ENCODE measurements at regions of chr16 and their contacts with region 1.

Region 1: GRCh38 chr16:4253394-4254150 is 11.7 kb upstream of the SRL start:
- DNase-seq: peak; percentile 96
- H3K27ac ChIP-seq: peak overlapping the region; percentile 89
- CTCF ChIP-seq: no peak

Region 2: GRCh38 chr16:3983081-3983520 is 270.5 kb before region 1 on chr16:
- CTCF ChIA-PET with region 1: interaction called, 32 read pairs
- POLR2A ChIA-PET with region 1: no interaction called
- DNase-seq: peak; percentile 80
- H3K27ac ChIP-seq: no peak overlapping the region; the same call in 1 of the 2 replicates
- CTCF ChIP-seq: peak; percentile 82

Region 3: DNA sequence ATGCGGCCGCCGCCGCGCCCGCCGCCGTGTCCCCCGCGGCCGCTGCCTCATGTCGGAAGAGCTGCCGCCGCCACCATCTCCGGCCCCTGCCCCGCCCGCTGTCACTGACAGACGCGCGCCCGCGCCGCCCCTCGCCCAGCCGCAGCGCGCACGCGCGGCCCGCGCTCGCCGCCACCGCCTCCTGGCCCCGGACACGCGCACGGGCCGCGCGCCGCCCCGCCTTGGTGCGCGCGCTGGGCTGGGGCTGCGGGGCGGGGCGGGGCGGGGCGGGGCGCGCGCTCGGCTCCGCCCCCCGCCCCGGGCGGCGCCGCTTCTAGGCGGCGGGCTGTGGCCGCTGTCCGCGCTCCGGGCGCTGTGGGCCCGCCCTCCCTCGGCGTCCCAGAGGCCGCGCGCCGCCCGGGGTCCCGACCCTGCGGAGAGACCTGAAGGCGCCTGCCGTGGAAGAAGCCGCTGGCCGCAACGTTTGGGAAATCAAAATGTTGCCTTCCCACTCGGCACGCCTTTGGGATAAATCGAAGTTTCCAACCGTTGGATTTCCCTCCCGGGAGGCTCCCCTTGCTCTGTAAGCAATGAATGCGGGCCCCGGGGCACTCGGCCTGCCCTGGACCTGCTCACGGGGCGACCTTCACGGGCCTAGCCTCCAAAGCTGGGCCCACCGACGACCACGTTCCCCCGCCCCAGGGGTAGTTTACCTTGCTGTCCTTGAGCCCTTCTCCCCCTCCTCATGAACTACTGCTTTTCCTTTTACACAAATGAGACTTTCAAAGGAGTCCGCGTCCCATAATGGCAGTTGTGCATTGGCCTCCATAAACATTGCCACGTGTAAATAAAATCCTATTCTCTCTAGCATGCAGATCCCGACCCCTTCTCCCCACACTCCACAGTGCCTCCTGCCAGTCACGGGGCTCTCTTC is 137.0 kb before region 1 on chr16 and contains the start of gene ADCY9:
- CTCF ChIA-PET with region 1: interaction called, 13 read pairs
- POLR2A ChIA-PET with region 1: no interaction called
- DNase-seq: peak; percentile 90
- H3K27ac ChIP-seq: peak within 1 kb of the TSS; percentile 77
- CTCF ChIP-seq: no peak

Region 4: DNA sequence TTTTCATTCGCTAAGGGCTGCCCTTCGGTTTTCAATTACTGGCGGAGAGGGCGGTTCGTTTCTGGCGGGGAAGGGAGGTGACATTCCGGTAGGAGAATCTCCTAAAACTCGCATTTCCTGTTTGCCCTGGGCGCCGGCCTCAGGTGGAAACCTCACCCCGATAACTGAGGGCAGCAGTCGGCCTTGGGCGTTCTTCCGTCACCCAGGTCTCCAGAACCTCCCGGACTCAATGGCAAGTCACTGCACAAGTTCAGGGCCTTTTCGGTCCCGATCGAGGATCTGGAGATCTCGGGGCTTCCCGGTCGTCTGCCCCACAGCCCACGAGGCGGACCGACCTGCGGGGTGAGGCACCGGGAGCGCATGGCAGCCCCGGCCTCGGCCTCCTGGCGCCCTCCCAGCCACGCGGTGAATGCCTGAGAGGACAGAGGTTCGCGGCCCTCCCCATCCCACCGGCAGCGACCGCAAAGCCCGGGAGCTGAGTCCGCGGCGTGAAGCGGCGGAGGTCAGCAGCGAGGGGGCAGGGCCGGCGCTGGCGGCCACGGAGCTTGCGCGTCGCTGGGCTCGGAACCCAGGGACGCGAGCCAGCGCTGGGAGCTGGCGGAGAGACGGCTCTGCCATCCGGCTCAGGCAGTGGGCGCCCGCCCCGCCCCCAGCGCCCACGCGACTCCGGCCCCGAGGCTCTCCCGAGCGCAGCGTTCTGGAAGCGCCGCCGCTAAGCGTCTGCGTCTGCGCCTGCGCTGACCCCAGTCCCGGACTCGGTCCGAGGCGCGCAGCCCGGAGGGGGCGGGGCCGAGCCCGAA is 70.1 kb before region 1 on chr16:
- CTCF ChIA-PET with region 1: no interaction called
- POLR2A ChIA-PET with region 1: interaction called, 10 read pairs
- DNase-seq: peak; percentile 97
- H3K27ac ChIP-seq: peak overlapping the region; percentile 98
- CTCF ChIP-seq: no peak

Region 5: GRCh38 chr16:4200000-4200780 is 53.4 kb before region 1 on chr16:
- CTCF ChIA-PET with region 1: interaction called, 31 read pairs
- POLR2A ChIA-PET with region 1: interaction called, 4 read pairs
- DNase-seq: peak; percentile 69
- H3K27ac ChIP-seq: no peak overlapping the region
- CTCF ChIP-seq: peak; percentile 66

Measured in RWPE1 (cell line).